ENCODE measurements at regions of chr12 and their contacts with region 1.

Region 1: DNA sequence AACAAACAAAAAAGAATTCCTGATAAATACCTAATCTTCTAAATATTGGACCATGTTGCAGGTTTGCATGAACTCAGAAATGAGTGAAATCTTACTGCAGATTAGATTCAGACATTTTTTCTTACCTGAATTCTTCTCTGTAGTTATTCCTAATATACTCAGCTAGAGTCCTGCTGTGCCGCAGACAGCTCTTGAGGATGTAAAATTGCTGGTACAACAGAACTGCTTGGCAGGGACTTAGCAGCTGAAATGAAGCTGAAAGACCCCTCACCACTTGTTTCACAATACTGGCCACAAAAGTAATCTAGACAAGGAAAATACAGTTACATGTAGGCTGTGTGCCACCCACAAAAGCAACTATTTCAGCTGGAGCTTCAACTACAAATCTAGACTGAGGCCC is 48.3 kb upstream of the KICS2 start:
- DNase-seq: no peak
- H3K4me3 ChIP-seq: no peak overlapping the region
- H3K27ac ChIP-seq: no peak overlapping the region
- H3K4me1 ChIP-seq: no peaks in the 10 kb centered on the region
- H3K27me3 ChIP-seq: no peaks in the 10 kb centered on the region
- CTCF ChIP-seq: no peak
- EP300 ChIP-seq: no peak
- POLR2A ChIP-seq: no peak

Region 2: DNA sequence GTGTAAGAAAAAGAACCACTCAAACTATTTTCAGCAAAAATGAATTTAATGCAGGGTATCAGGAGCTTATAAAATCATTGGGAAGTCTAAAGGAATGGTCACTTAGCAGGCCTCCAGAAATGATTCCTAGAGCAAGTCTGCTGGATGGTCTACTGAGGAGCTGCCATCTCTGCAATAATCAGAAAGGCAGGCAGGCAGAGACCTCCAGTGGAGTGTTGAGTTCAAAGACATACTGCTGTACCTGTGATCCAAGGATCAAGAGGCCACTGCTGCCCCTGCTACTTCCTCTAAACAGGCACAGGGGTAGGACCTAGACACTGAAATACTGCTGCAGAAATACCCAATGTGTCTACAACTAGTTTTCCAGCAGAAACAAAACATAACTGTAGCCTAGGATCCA is 33.9 kb before region 1 on chr12:
- in situ Hi-C with region 1: no loop called
- intact Hi-C with region 1: loop called (anchors 2 kb)
- DNase-seq: no peak
- H3K4me3 ChIP-seq: no peak overlapping the region
- H3K27ac ChIP-seq: no peak overlapping the region
- H3K4me1 ChIP-seq: peaks cover 0 to 2% (median 0%) of the 10 kb centered on the region in 4 donors
- H3K27me3 ChIP-seq: no peaks in the 10 kb centered on the region
- CTCF ChIP-seq: no peak
- EP300 ChIP-seq: no peak
- POLR2A ChIP-seq: no peak

Measured in transverse colon (tissue), 4 donors.